Left ventricle myocardium superior (tissue), 1 donor: ENCODE measurements at regions of chr3 and their contacts with region 1.

Region 1: DNA sequence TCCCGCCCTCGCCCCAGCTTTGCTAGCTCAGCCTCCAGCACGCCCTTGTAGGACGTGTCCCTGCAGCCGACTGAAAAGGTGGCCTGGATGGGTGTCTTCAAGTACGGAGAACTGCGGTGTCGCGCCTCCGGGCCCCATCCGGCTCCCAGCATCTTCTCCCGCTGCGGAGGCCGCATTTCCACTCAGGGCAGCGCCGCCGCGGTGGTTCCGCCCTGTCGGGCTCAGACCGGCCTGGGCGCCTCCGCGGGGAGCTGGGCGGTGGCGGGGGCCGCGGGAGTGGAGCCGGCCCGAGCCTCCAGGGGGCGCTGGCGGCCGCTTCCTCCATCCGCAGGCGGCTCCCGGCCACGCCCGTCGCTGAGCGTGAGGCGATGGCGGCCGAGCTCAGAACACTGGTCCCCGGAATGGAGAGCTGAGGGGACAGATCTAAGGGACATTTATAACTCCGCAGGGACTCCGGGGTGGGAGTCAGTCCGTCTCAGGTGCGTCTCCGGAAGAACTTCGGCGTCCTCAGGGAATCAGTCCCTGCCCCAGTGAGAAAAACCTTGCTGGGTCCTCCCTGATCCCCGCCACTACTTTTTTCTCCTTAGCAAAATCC is 13.6 kb upstream of the SMCO1 start:
- DNase-seq: peak; percentile 87
- ATAC-seq: peak; percentile 99

Region 2: DNA sequence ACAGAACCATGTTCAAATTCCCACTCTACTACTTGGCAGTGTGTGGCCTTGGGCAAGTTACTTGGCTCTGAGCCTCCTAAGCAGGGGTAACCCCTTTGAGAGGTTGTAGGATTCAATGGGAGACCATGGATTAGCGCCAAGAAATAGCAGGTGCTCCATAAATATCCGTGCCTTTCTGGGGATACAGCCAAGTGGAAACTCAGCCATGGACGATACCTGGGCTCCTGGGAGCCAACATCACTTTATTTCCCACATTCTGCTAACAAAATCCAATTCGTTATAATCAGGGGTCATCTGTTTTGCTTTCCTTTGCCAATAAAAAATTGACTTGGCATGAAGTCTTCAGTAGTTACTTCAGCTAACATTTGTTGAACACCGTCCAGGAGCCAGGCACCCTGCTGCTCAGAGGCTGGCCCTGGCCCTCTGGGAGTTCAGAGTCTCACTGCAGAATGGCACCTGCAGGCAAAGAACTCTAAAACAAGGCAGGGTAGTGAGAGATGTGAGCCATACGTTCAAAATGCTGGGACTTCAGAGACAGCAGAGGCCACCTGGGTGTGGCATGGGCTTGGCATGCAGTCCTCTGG is 359.8 kb before region 1 on chr3:
- intact Hi-C with region 1: no loop called
- DNase-seq: no peak
- ATAC-seq: peak; percentile 81

Region 3: GRCh38 chr3:196251918-196252317 is 276.8 kb before region 1 on chr3:
- intact Hi-C with region 1: loop called (anchors 10 kb)
- DNase-seq: no peak
- ATAC-seq: no peak